CD4-positive, alpha-beta memory T cell (primary cell): ENCODE measurements at regions of chr1 and their contacts with region 1.

Region 1: GRCh38 chr1:6343506-6344405 is 49.8 kb downstream of the ACOT7 start:
- DNase-seq: peak; percentile 50 to 56 (median 51)
- H3K4me3 ChIP-seq: no peak overlapping the region
- H3K4me3 Mint-ChIP-seq: peak overlapping the region in 1 of 8 donors; percentile 37
- H3K27ac ChIP-seq: no peak overlapping the region
- H3K27ac Mint-ChIP-seq: peak overlapping the region in 2 of 7 donors; percentile 29 to 84
- H3K4me1 ChIP-seq: peaks cover 13% of the 10 kb centered on the region
- H3K4me1 Mint-ChIP-seq: peaks cover 8 to 20% (median 11%) of the 10 kb centered on the region in 4 donors
- H3K27me3 ChIP-seq: no peaks in the 10 kb centered on the region
- H3K27me3 Mint-ChIP-seq: no peaks in the 10 kb centered on the region

Region 2: DNA sequence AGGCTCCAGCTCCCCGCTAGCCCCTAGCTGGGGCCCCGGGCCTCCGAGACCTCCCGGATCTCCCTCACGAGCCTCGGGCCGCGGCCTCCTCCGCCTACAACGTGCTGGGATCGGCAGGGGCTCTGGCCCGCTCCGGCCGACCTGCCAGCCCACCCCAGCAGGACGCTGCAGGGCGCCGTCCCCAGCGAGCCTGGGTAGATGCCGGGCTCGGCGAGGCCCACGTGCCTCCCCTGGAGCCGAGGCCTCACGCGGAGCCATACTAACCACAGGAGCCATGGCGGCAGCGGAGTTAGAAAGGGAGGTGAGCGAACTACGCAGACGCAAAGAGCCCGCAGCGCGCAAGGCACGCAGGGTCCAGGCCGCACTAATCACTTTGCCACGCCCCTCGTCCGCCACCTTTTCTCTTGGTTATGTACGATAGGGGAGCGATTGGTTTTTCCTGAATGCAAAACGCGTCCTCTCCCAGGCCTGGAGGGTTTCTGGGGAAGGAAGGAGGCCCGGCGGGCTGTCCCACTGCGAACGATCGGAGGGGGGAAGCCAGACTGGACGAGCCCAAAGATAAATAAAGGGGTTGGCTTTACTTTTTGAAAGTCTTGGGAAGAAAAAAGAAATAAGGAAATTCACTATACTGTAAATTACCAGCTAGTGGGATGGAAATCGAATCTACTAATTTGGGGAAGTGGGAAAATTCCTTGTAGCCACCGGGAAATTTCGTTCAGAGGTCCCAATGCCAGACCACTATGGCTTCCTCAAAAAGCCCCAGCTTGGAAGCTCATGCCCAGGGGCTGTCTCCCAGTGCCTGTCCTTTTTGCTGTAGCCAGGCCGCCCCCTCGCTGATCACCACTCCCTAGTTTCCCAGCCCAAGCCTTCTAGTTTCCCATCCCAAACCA is 144.2 kb before region 1 on chr1 and contains the start of gene RPL22:
- CTCF ChIA-PET with region 1: no interaction called
- POLR2A ChIA-PET with region 1: no interaction called
- intact Hi-C with region 1: no loop called
- DNase-seq: peak; percentile 94 to 99 (median 97)
- H3K4me3 ChIP-seq: peak within 1 kb of the TSS; percentile 57 to 84
- H3K4me3 Mint-ChIP-seq: peak within 1 kb of the TSS; percentile 88 to 94 (median 92)
- H3K27ac ChIP-seq: peak within 1 kb of the TSS; percentile 74
- H3K27ac Mint-ChIP-seq: peak within 1 kb of the TSS; percentile 86 to 97 (median 95)
- H3K4me1 ChIP-seq: peaks cover 38% of the 10 kb centered on the region
- H3K4me1 Mint-ChIP-seq: peaks cover 31 to 53% (median 42%) of the 10 kb centered on the region in 4 donors
- H3K27me3 ChIP-seq: no peaks in the 10 kb centered on the region
- H3K27me3 Mint-ChIP-seq: peaks cover 0 to 2% of the 10 kb centered on the region in 2 donors
- total RNA-seq, gene RPL22: 491 to 503 TPM

Region 3: GRCh38 chr1:6325482-6325881 is 18.3 kb before region 1 on chr1:
- CTCF ChIA-PET with region 1: no interaction called
- POLR2A ChIA-PET with region 1: no interaction called
- intact Hi-C with region 1: no loop called
- DNase-seq: no peak
- H3K4me3 ChIP-seq: no peak overlapping the region
- H3K4me3 Mint-ChIP-seq: no peak overlapping the region
- H3K27ac ChIP-seq: no peak overlapping the region
- H3K27ac Mint-ChIP-seq: peak overlapping the region in 1 of 7 donors; percentile 31
- H3K4me1 ChIP-seq: no peaks in the 10 kb centered on the region
- H3K4me1 Mint-ChIP-seq: no peaks in the 10 kb centered on the region
- H3K27me3 ChIP-seq: no peaks in the 10 kb centered on the region
- H3K27me3 Mint-ChIP-seq: no peaks in the 10 kb centered on the region

Region 4: GRCh38 chr1:6401673-6402072 is 57.9 kb after region 1 on chr1:
- CTCF ChIA-PET with region 1: interaction called, 173 read pairs
- POLR2A ChIA-PET with region 1: interaction called, 13 read pairs
- intact Hi-C with region 1: loop called (anchors 1 kb)
- DNase-seq: no peak
- H3K4me3 ChIP-seq: no peak overlapping the region
- H3K4me3 Mint-ChIP-seq: no peak overlapping the region
- H3K27ac ChIP-seq: no peak overlapping the region
- H3K27ac Mint-ChIP-seq: no peak overlapping the region
- H3K4me1 ChIP-seq: no peaks in the 10 kb centered on the region
- H3K4me1 Mint-ChIP-seq: peaks cover 0 to 5% (median 4%) of the 10 kb centered on the region in 4 donors
- H3K27me3 ChIP-seq: no peaks in the 10 kb centered on the region
- H3K27me3 Mint-ChIP-seq: peaks cover 2 to 4% of the 10 kb centered on the region in 2 donors

Region 5: GRCh38 chr1:6519935-6520671 is 176.3 kb after region 1 on chr1:
- CTCF ChIA-PET with region 1: no interaction called
- POLR2A ChIA-PET with region 1: no interaction called
- intact Hi-C with region 1: no loop called
- DNase-seq: no peak
- H3K4me3 ChIP-seq: no peak overlapping the region
- H3K4me3 Mint-ChIP-seq: no peak overlapping the region
- H3K27ac ChIP-seq: no peak overlapping the region
- H3K27ac Mint-ChIP-seq: peak overlapping the region in 4 of 7 donors; percentile 15 to 81 (median 42)
- H3K4me1 ChIP-seq: no peaks in the 10 kb centered on the region
- H3K4me1 Mint-ChIP-seq: peaks cover 0 to 4% (median 2%) of the 10 kb centered on the region in 4 donors
- H3K27me3 ChIP-seq: no peaks in the 10 kb centered on the region
- H3K27me3 Mint-ChIP-seq: no peaks in the 10 kb centered on the region